Upper lobe of right lung (tissue), 1 donor: ENCODE measurements at regions of chr3 and their contacts with region 1.

Region 1: DNA sequence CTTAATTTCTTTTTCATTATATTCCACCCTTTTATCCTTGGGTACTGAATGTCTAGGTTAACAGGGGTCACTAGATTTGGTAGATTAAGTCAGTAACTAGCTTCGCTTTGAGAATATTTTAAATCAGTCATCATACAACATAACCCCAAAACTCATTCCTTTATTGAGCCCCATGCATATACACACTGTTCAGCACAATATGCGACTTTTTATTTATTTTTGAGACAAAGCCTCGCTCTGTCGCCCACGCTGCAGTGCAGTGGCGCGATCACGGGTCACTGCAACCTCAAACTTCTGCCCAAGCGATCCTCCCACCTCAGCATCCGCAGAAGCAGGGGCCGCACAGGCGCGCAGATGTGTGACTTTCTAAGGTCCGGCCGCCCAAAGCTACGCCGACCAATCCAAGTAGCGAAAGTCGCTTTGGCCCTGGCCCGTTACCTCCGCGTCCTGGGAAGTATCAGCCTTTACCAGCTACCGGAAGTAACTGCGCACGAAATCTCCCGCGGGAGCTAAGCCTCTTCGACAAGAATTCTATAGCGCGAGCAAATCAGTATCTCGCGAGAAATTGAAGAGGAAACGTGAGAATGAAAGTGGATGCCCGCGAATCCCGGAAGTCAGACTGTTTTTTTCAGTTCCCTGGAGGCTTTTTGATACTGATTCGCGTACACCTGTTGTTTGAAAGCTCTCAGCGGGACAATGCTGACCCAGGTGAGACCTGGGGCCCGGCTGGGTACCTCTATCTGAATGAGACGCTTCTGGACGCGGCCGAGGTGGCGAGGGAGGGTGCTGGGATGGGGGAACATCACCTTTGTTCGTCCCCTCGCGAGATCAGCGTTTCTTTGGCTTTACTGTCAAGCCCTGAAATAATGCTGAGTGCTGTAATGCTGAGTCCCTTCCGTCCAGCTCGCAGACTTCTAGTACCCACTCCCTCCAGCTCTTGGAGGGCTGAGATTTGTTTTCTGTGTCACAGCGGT is at the starts of genes DHFR2 and NSUN3:
- DNase-seq: peak; percentile 92
- ATAC-seq: peak; percentile 95
- H3K4me3 ChIP-seq: peak within 1 kb of the TSS; percentile 82
- H3K27ac ChIP-seq: peak within 1 kb of the TSS; percentile 98
- H3K4me1 ChIP-seq: peaks cover 28% of the 10 kb centered on the region
- H3K27me3 ChIP-seq: no peaks in the 10 kb centered on the region
- CTCF ChIP-seq: no peak
- total RNA-seq, gene DHFR2: 8.1 TPM
- total RNA-seq, gene NSUN3: 18.0 TPM

Region 2: DNA sequence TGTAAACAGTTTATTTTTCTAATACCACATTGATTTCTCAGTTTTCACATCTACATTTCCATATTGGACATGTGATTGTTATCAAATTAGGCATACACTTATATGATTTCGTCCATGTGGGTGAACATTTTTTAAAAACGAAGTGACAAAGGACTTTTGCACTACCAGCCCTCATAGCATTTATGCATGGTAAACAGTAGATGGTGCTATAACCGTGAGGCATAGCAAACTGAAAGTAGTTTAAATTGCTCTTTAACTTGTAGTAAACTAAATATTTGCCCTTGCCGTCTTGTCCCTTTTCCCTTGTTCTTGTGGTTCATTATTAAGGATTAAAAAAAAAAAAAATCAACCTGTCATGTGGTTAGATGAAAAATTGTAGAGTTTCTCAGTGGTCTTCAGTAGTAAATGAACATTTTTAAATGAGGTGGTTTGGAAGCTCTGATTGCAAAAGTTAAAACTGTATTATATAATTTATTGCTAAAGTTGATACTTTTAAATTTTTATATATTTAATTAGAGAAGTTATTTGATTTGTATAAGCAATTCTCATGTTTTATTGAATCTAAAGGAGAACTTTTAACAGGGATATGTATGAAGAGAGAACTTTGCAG is 58.3 kb before region 1 on chr3:
- intact Hi-C with region 1: loop called (anchors 10 kb)
- DNase-seq: no peak
- ATAC-seq: peak; percentile 88
- H3K4me3 ChIP-seq: peak overlapping the region; percentile 23
- H3K27ac ChIP-seq: peak overlapping the region; percentile 0
- H3K4me1 ChIP-seq: peaks cover 15% of the 10 kb centered on the region
- H3K27me3 ChIP-seq: no peaks in the 10 kb centered on the region
- CTCF ChIP-seq: peak; percentile 88

Region 3: DNA sequence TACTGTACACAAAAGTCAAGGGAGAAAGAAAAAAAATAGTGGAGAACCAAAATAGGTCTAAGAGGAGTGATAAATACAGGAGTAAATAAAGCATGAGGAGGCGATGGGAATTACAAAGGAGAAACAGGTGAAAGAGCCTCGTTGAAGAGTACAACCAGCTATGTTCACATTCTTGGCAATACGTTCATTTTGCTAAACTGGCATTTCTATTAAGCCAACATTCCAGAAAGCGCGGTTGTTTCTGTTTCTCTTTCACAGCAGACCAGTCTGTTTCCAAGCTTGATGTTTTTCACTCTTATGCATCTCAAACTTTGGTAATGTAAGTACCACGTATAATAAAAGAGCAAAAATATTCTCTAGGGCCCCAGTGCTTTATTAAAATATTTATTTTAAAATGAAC is 74.7 kb after region 1 on chr3:
- intact Hi-C with region 1: no loop called
- DNase-seq: no peak
- ATAC-seq: no peak
- H3K4me3 ChIP-seq: no peak overlapping the region
- H3K27ac ChIP-seq: no peak overlapping the region
- H3K4me1 ChIP-seq: no peaks in the 10 kb centered on the region
- H3K27me3 ChIP-seq: no peaks in the 10 kb centered on the region
- CTCF ChIP-seq: no peak